Thyroid gland (tissue), 4 donors: ENCODE measurements at regions of chr6 and their contacts with region 1.

Region 1: GRCh38 chr6:53986165-53986720 is 125.0 kb upstream of the MLIP start:
- DNase-seq: peak; percentile 62 to 67
- H3K4me3 ChIP-seq: no peak overlapping the region
- H3K27ac ChIP-seq: no peak overlapping the region
- H3K4me1 ChIP-seq: peaks cover 28 to 32% of the 10 kb centered on the region in 2 donors
- H3K27me3 ChIP-seq: no peaks in the 10 kb centered on the region
- CTCF ChIP-seq: peak; percentile 58 to 91 (median 83)
- POLR2A ChIP-seq: no peak

Region 2: GRCh38 chr6:53752856-53753255 is 233.4 kb before region 1 on chr6:
- intact Hi-C with region 1: no loop called
- DNase-seq: no peak
- H3K4me3 ChIP-seq: no peak overlapping the region
- H3K27ac ChIP-seq: no peak overlapping the region
- H3K4me1 ChIP-seq: no peaks in the 10 kb centered on the region
- H3K27me3 ChIP-seq: no peaks in the 10 kb centered on the region
- CTCF ChIP-seq: no peak
- POLR2A ChIP-seq: no peak

Region 3: GRCh38 chr6:54074578-54075195 is 88.4 kb after region 1 on chr6:
- intact Hi-C with region 1: loop called (anchors 10 kb)
- DNase-seq: no peak
- H3K4me3 ChIP-seq: no peak overlapping the region
- H3K27ac ChIP-seq: no peak overlapping the region
- H3K4me1 ChIP-seq: no peaks in the 10 kb centered on the region
- H3K27me3 ChIP-seq: no peaks in the 10 kb centered on the region
- CTCF ChIP-seq: no peak
- POLR2A ChIP-seq: no peak

Region 4: GRCh38 chr6:54267798-54268197 is 281.6 kb after region 1 on chr6:
- intact Hi-C with region 1: loop called (anchors 5 kb)
- DNase-seq: peak; percentile 44 to 45
- H3K4me3 ChIP-seq: no peak overlapping the region
- H3K27ac ChIP-seq: no peak overlapping the region
- H3K4me1 ChIP-seq: no peaks in the 10 kb centered on the region
- H3K27me3 ChIP-seq: no peaks in the 10 kb centered on the region
- CTCF ChIP-seq: peak in 5 of 6 experiments; percentile 9 to 72 (median 47)
- POLR2A ChIP-seq: no peak